ENCODE measurements at regions of chr3 and their contacts with region 1.

Region 1: GRCh38 chr3:133655731-133656515 is 5.8 kb downstream of the TOPBP1 start:
- DNase-seq: no peak
- ATAC-seq: no peak
- H3K4me3 Mint-ChIP-seq: no peak overlapping the region
- H3K27ac Mint-ChIP-seq: no peak overlapping the region
- H3K4me1 Mint-ChIP-seq: peaks cover 15% of the 10 kb centered on the region
- H3K27me3 Mint-ChIP-seq: no peaks in the 10 kb centered on the region

Region 2: GRCh38 chr3:133540896-133541674 is 114.8 kb before region 1 on chr3:
- CTCF ChIA-PET with region 1: no interaction called
- POLR2A ChIA-PET with region 1: no interaction called
- intact Hi-C with region 1: no loop called
- DNase-seq: no peak
- ATAC-seq: no peak
- H3K4me3 Mint-ChIP-seq: no peak overlapping the region
- H3K27ac Mint-ChIP-seq: no peak overlapping the region
- H3K4me1 Mint-ChIP-seq: no peaks in the 10 kb centered on the region
- H3K27me3 Mint-ChIP-seq: no peaks in the 10 kb centered on the region

Region 3: GRCh38 chr3:133610031-133610430 is 45.9 kb before region 1 on chr3:
- CTCF ChIA-PET with region 1: no interaction called
- POLR2A ChIA-PET with region 1: no interaction called
- intact Hi-C with region 1: loop called in 1 of 2 experiments (anchors 5 kb)
- DNase-seq: no peak
- ATAC-seq: no peak
- H3K4me3 Mint-ChIP-seq: no peak overlapping the region
- H3K27ac Mint-ChIP-seq: no peak overlapping the region
- H3K4me1 Mint-ChIP-seq: no peaks in the 10 kb centered on the region
- H3K27me3 Mint-ChIP-seq: no peaks in the 10 kb centered on the region

Region 4: DNA sequence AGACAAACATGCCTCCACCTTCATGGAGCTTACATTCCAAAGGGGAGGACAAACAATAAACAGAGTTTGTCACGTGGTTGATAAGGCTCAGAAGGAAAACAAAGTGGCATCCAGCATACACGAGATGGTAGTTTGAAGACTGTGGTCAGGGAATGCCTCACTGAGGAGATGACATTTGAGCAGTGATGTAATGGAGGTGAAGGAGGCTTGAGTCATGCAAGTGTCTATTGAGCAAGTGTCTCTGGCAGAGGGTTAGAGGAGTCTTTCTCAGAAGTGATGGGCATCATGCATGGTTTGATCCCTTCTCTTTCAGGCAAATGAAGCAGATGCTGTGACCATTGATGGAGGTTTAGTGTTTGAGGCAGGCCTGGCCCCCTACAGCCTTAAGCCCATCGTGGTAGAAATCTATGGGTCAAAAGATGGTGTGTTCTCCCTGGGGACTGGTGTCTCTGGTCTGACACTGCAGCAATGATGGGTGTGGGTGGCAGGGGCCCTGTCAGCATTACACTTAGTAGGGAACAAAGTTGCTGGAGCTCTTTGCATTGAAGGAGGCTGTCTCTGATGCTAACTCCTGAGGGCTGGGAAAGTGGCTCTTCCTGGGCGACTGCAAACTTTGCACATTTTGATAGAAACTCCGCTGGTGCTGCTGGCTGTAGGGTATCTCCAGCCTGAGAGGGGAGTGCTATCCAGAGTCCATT is 35.6 kb after region 1 on chr3:
- CTCF ChIA-PET with region 1: no interaction called
- POLR2A ChIA-PET with region 1: no interaction called
- intact Hi-C with region 1: no loop called
- DNase-seq: no peak
- ATAC-seq: peak; percentile 64
- H3K4me3 Mint-ChIP-seq: no peak overlapping the region
- H3K27ac Mint-ChIP-seq: no peak overlapping the region
- H3K4me1 Mint-ChIP-seq: peaks cover 4% of the 10 kb centered on the region
- H3K27me3 Mint-ChIP-seq: peaks cover 2% of the 10 kb centered on the region